Caco-2 (cell line): ENCODE measurements at regions of chr5 and their contacts with region 1.

Region 1: GRCh38 chr5:127975935-127976334 is 107.6 kb upstream of the SLC12A2 start:
- DNase-seq: no peak
- H3K4me3 ChIP-seq: no peak overlapping the region
- H3K4me3 Mint-ChIP-seq: no peak overlapping the region
- H3K27ac Mint-ChIP-seq: no peak overlapping the region
- H3K4me1 ChIP-seq: no peaks in the 10 kb centered on the region
- H3K4me1 Mint-ChIP-seq: no peaks in the 10 kb centered on the region
- H3K27me3 ChIP-seq: no peaks in the 10 kb centered on the region
- H3K27me3 Mint-ChIP-seq: no peaks in the 10 kb centered on the region
- CTCF ChIP-seq: peak; percentile 9 to 32

Region 2: DNA sequence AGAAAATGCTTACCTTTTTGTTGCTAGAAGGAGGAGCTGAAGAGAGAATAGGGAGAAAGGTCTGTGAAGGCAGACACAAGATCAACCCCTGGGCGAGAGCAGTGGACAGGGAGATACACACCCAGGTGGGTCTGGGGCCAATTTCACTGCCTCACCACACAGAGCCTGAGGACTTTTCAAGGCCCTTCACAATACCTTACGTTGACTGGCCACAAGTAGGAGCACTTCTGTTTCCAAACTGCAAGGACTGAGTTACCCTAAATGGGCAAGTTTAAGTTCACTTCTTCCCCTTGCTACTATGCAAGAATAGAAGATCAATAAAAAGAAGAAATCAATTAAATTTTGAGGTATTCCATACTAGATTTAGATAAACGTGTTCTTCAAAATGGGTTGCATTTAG is 66.9 kb before region 1 on chr5:
- CTCF ChIA-PET with region 1: no interaction called
- POLR2A ChIA-PET with region 1: no interaction called
- intact Hi-C with region 1: loop called (anchors 5 kb)
- DNase-seq: peak; percentile 49 to 51
- H3K4me3 ChIP-seq: no peak overlapping the region
- H3K4me3 Mint-ChIP-seq: no peak overlapping the region
- H3K27ac Mint-ChIP-seq: no peak overlapping the region
- H3K4me1 ChIP-seq: peaks cover 16% of the 10 kb centered on the region; the same call in 1 of the 2 replicates
- H3K4me1 Mint-ChIP-seq: peaks cover 10% of the 10 kb centered on the region
- H3K27me3 ChIP-seq: no peaks in the 10 kb centered on the region
- H3K27me3 Mint-ChIP-seq: no peaks in the 10 kb centered on the region
- CTCF ChIP-seq: peak; percentile 53 to 72

Region 3: GRCh38 chr5:128328446-128328845 is 352.5 kb after region 1 on chr5:
- CTCF ChIA-PET with region 1: no interaction called
- POLR2A ChIA-PET with region 1: no interaction called
- intact Hi-C with region 1: no loop called
- DNase-seq: no peak
- H3K4me3 ChIP-seq: no peak overlapping the region
- H3K4me3 Mint-ChIP-seq: no peak overlapping the region
- H3K27ac Mint-ChIP-seq: no peak overlapping the region
- H3K4me1 ChIP-seq: 0 out of 2 replicates have a peak, but pooled peaks cover 6% of the 10 kb centered on the region
- H3K4me1 Mint-ChIP-seq: peaks cover 20% of the 10 kb centered on the region
- H3K27me3 ChIP-seq: no peaks in the 10 kb centered on the region
- H3K27me3 Mint-ChIP-seq: no peaks in the 10 kb centered on the region
- CTCF ChIP-seq: no peak